CD8-positive, alpha-beta T cell (primary cell): ENCODE measurements at regions of chr9 and their contacts with region 1.

Region 1: DNA sequence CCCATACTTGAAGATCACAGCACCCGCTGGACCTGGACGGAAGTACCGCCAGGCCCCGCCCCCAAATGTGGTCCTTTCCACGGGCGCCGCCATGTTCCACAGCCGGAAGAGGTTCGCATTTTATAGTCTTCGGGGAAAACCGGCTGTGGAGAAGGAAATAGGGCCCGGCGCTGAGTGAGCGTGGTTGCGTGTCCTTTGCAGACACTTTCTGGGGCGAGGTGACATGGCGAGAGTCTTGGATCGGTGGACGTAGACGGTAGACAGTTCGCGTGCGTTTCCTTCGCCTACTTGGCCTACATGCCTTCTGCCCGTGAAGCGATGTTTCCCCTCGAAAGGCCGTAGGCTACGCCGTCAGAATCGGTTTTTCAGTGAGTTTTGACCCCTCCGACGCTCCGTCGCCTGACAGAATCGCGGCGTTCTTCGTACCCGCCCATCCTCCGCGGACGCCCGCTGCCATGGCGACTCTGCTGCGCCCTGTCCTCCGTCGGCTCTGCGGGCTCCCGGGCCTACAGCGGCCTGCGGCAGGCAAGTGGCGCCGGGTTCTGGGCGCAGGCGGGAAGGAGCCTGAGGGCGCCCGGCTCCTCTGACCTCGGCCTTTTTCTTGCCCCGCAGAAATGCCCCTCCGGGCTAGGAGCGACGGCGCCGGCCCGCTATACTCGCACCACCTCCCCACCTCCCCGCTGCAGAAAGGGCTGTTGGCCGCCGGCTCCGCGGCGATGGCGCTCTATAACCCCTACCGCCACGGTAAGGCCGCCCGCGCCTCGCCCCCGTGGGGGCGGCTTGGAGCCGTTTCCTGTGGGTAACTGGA is at the starts of genes COQ4 and TRUB2:
- DNase-seq: peak; percentile 83 to 97 (median 92)
- ATAC-seq: peak; percentile 86
- H3K4me3 ChIP-seq: peak within 1 kb of the TSS; percentile 88 to 89
- H3K4me3 Mint-ChIP-seq: peak within 1 kb of the TSS; percentile 95
- H3K27ac ChIP-seq: peak within 1 kb of the TSS; percentile 80 to 89
- H3K27ac Mint-ChIP-seq: peak within 1 kb of the TSS; percentile 96
- H3K4me1 ChIP-seq: peaks cover 17% of the 10 kb centered on the region
- H3K4me1 Mint-ChIP-seq: peaks cover 30% of the 10 kb centered on the region
- H3K27me3 ChIP-seq: no peaks in the 10 kb centered on the region
- H3K27me3 Mint-ChIP-seq: no peaks in the 10 kb centered on the region
- CTCF ChIP-seq: no peak
- total RNA-seq, gene COQ4: 18.2 to 20.1 TPM
- total RNA-seq, gene TRUB2: 9.8 to 12.9 TPM

Region 2: GRCh38 chr9:128191406-128192046 is 131.1 kb before region 1 on chr9 and contains the start of gene CIZ1:
- CTCF ChIA-PET with region 1: no interaction called
- POLR2A ChIA-PET with region 1: no interaction called
- intact Hi-C with region 1: loop called (anchors 1 kb)
- DNase-seq: peak; percentile 42 to 87 (median 75)
- ATAC-seq: peak; percentile 80
- H3K4me3 ChIP-seq: peak within 1 kb of the TSS; percentile 77 to 78
- H3K4me3 Mint-ChIP-seq: peak within 1 kb of the TSS; percentile 94
- H3K27ac ChIP-seq: peak within 1 kb of the TSS; percentile 58 to 68
- H3K27ac Mint-ChIP-seq: peak within 1 kb of the TSS; percentile 92
- H3K4me1 ChIP-seq: peaks cover 16% of the 10 kb centered on the region
- H3K4me1 Mint-ChIP-seq: peaks cover 35% of the 10 kb centered on the region
- H3K27me3 ChIP-seq: no peaks in the 10 kb centered on the region
- H3K27me3 Mint-ChIP-seq: no peaks in the 10 kb centered on the region
- CTCF ChIP-seq: peak; percentile 65
- total RNA-seq, gene CIZ1: 109 to 116 TPM

Region 3: GRCh38 chr9:128259156-128259555 is 63.5 kb before region 1 on chr9:
- CTCF ChIA-PET with region 1: no interaction called
- POLR2A ChIA-PET with region 1: no interaction called
- intact Hi-C with region 1: no loop called
- DNase-seq: no peak
- ATAC-seq: no peak
- H3K4me3 ChIP-seq: no peak overlapping the region
- H3K4me3 Mint-ChIP-seq: no peak overlapping the region
- H3K27ac ChIP-seq: no peak overlapping the region
- H3K27ac Mint-ChIP-seq: no peak overlapping the region
- H3K4me1 ChIP-seq: no peaks in the 10 kb centered on the region
- H3K4me1 Mint-ChIP-seq: no peaks in the 10 kb centered on the region
- H3K27me3 ChIP-seq: no peaks in the 10 kb centered on the region
- H3K27me3 Mint-ChIP-seq: no peaks in the 10 kb centered on the region
- CTCF ChIP-seq: no peak

Region 4: GRCh38 chr9:128275996-128276573 is 46.5 kb before region 1 on chr9 and contains the starts of genes GOLGA2 and SWI5:
- CTCF ChIA-PET with region 1: no interaction called
- POLR2A ChIA-PET with region 1: no interaction called
- intact Hi-C with region 1: loop called (anchors 1 kb)
- DNase-seq: peak; percentile 99 to 100 (median 100)
- ATAC-seq: peak; percentile 93
- H3K4me3 ChIP-seq: peak within 1 kb of the TSS; percentile 75 to 81
- H3K4me3 Mint-ChIP-seq: peak within 1 kb of the TSS; percentile 96
- H3K27ac ChIP-seq: peak within 1 kb of the TSS; percentile 76 to 81
- H3K27ac Mint-ChIP-seq: peak within 1 kb of the TSS; percentile 96
- H3K4me1 ChIP-seq: peaks cover 22% of the 10 kb centered on the region
- H3K4me1 Mint-ChIP-seq: peaks cover 32% of the 10 kb centered on the region
- H3K27me3 ChIP-seq: no peaks in the 10 kb centered on the region
- H3K27me3 Mint-ChIP-seq: no peaks in the 10 kb centered on the region
- CTCF ChIP-seq: no peak
- total RNA-seq, gene GOLGA2: 49.9 to 59.0 TPM
- total RNA-seq, gene SWI5: 3.5 to 4.3 TPM

Region 5: DNA sequence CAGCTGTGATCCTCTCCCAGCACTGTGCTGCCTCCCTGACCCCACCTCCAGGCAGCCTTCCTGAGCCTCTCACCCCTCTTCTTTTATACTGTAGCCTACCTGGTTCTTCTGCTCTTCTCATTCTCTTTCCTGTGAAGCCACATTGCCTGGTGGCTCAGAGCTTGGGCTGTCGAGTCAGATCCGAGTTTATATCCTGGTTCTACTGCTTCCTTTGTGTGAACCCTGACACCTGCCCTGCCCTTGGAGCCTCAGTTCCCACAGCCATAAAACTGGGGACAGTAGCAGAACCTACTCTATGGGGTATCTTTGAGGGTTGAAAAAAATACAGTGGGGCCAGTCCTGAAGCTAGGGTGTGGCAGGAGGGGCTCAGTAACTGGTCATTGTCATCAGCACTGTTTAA is 26.5 kb after region 1 on chr9:
- CTCF ChIA-PET with region 1: no interaction called
- POLR2A ChIA-PET with region 1: no interaction called
- intact Hi-C with region 1: no loop called
- DNase-seq: no peak
- ATAC-seq: no peak
- H3K4me3 ChIP-seq: no peak overlapping the region
- H3K4me3 Mint-ChIP-seq: no peak overlapping the region
- H3K27ac ChIP-seq: no peak overlapping the region
- H3K27ac Mint-ChIP-seq: no peak overlapping the region
- H3K4me1 ChIP-seq: no peaks in the 10 kb centered on the region
- H3K4me1 Mint-ChIP-seq: no peaks in the 10 kb centered on the region
- H3K27me3 ChIP-seq: no peaks in the 10 kb centered on the region
- H3K27me3 Mint-ChIP-seq: no peaks in the 10 kb centered on the region
- CTCF ChIP-seq: no peak

Region 6: GRCh38 chr9:128361986-128362646 is 39.5 kb after region 1 on chr9:
- CTCF ChIA-PET with region 1: interaction called, 3 read pairs
- POLR2A ChIA-PET with region 1: no interaction called
- intact Hi-C with region 1: loop called in 1 of 2 experiments (anchors 2 kb)
- DNase-seq: peak; percentile 26 to 79 (median 67)
- ATAC-seq: peak; percentile 91
- H3K4me3 ChIP-seq: peak overlapping the region; percentile 47 to 65
- H3K4me3 Mint-ChIP-seq: peak overlapping the region; percentile 83
- H3K27ac ChIP-seq: peak overlapping the region in 1 of 2 experiments; percentile 23
- H3K27ac Mint-ChIP-seq: no peak overlapping the region
- H3K4me1 ChIP-seq: peaks cover 16% of the 10 kb centered on the region
- H3K4me1 Mint-ChIP-seq: peaks cover 10% of the 10 kb centered on the region
- H3K27me3 ChIP-seq: peaks cover 0 to 2% of the 10 kb centered on the region in 2 experiments
- H3K27me3 Mint-ChIP-seq: no peaks in the 10 kb centered on the region
- CTCF ChIP-seq: peak; percentile 88

Region 7: GRCh38 chr9:128470560-128470959 is 148.0 kb after region 1 on chr9:
- CTCF ChIA-PET with region 1: no interaction called
- POLR2A ChIA-PET with region 1: no interaction called
- intact Hi-C with region 1: no loop called
- DNase-seq: peak in 5 of 9 experiments; percentile 10 to 67 (median 51)
- ATAC-seq: peak; percentile 65
- H3K4me3 ChIP-seq: no peak overlapping the region
- H3K4me3 Mint-ChIP-seq: no peak overlapping the region
- H3K27ac ChIP-seq: no peak overlapping the region
- H3K27ac Mint-ChIP-seq: no peak overlapping the region
- H3K4me1 ChIP-seq: peaks cover 10% of the 10 kb centered on the region
- H3K4me1 Mint-ChIP-seq: peaks cover 3% of the 10 kb centered on the region
- H3K27me3 ChIP-seq: no peaks in the 10 kb centered on the region
- H3K27me3 Mint-ChIP-seq: no peaks in the 10 kb centered on the region
- CTCF ChIP-seq: no peak

Region 8: GRCh38 chr9:128504485-128505413 is 182.1 kb after region 1 on chr9 and contains the start of gene GLE1:
- CTCF ChIA-PET with region 1: no interaction called
- POLR2A ChIA-PET with region 1: no interaction called
- intact Hi-C with region 1: loop called in 1 of 2 experiments (anchors 5 kb)
- DNase-seq: peak; percentile 93 to 99 (median 97)
- ATAC-seq: peak; percentile 95
- H3K4me3 ChIP-seq: peak within 1 kb of the TSS; percentile 80 to 96
- H3K4me3 Mint-ChIP-seq: peak within 1 kb of the TSS; percentile 99
- H3K27ac ChIP-seq: peak within 1 kb of the TSS; percentile 84 to 90
- H3K27ac Mint-ChIP-seq: peak within 1 kb of the TSS; percentile 99
- H3K4me1 ChIP-seq: peaks cover 18% of the 10 kb centered on the region
- H3K4me1 Mint-ChIP-seq: peaks cover 38% of the 10 kb centered on the region
- H3K27me3 ChIP-seq: no peaks in the 10 kb centered on the region
- H3K27me3 Mint-ChIP-seq: no peaks in the 10 kb centered on the region
- CTCF ChIP-seq: no peak
- total RNA-seq, gene GLE1: 6.6 to 8.5 TPM

Region 9: GRCh38 chr9:128771745-128772519 is 449.3 kb after region 1 on chr9 and contains the start of gene ZER1:
- CTCF ChIA-PET with region 1: no interaction called
- POLR2A ChIA-PET with region 1: no interaction called
- intact Hi-C with region 1: loop called in 1 of 2 experiments (anchors 5 kb)
- DNase-seq: peak; percentile 86 to 98 (median 95)
- ATAC-seq: peak; percentile 85
- H3K4me3 ChIP-seq: peak within 1 kb of the TSS; percentile 82 to 98
- H3K4me3 Mint-ChIP-seq: peak within 1 kb of the TSS; percentile 96
- H3K27ac ChIP-seq: peak within 1 kb of the TSS; percentile 80 to 98
- H3K27ac Mint-ChIP-seq: peak within 1 kb of the TSS; percentile 99
- H3K4me1 ChIP-seq: peaks cover 22% of the 10 kb centered on the region
- H3K4me1 Mint-ChIP-seq: peaks cover 33% of the 10 kb centered on the region
- H3K27me3 ChIP-seq: no peaks in the 10 kb centered on the region
- H3K27me3 Mint-ChIP-seq: no peaks in the 10 kb centered on the region
- CTCF ChIP-seq: no peak
- total RNA-seq, gene ZER1: 35.9 to 45.2 TPM